SK-N-SH (cell line): ENCODE measurements at regions of chr6 and their contacts with region 1.

Region 1: DNA sequence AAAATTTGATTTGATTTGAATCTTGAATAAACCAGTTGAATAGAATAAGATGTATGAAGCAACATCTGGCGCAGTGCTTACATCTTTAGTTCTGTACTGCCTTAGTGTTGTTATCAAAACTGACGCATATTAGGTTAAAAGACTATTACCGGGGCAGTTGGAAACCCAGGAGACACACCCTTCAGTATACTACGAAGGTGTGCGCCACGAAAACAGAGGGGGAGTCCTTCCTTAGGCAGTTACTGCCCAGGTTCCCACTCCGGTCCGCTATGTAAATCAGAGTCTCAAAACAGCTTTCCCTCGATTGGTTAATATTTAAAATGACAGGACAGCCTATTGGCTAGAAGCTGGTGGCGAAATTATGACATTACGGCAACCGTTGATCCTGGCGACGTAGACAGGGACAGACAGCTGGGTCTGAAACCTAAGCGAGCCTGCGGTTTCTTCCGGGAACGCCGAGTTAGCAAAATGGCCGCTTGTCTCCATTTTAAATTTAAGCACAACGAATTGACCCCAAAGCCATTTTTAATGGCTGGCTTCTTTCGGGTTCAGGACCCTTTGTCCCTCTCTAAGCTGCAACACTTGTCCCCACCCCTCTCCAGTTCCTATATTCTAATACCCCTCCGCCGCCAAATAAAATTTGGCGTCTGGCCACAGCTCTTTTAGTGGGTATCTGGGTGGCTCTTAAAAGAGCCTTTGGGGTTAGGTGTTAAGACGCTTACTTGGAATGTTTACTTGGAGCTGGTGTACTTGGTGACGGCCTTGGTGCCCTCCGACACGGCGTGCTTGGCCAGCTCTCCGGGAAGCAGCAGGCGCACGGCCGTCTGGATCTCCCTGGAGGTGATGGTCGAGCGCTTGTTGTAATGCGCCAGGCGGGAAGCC is 35.8 kb downstream of the HFE start:
- DNase-seq: peak; percentile 76
- H3K4me3 ChIP-seq: peak overlapping the region; percentile 84 to 94
- H3K27ac ChIP-seq: peak overlapping the region; percentile 92 to 100
- H3K4me1 ChIP-seq: peaks cover 7% of the 10 kb centered on the region in 2 experiments; a peak in 3 of 4 replicates
- H3K27me3 ChIP-seq: no peaks in the 10 kb centered on the region
- CTCF ChIP-seq: no peak
- EP300 ChIP-seq: peak; percentile 93 to 98
- RAD21 ChIP-seq: no peak

Region 2: DNA sequence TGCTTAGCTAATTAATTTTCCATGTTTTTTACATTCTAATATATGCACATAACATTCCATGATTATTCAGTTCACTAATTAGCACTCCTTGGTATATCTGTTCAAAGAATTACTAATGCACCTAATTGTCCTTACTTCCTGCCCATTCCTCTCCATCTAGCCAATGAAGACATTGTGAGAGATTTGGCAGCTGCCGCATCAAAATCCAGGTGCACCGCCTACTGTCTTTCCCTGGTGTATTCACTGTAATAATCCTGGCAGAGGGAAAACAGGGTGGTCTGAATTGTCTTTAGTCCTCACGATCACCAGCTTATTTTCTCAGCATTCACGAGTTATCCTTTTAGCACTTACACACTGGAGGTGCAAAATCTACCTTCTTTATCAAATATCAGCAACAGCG is 532.0 kb before region 1 on chr6:
- CTCF ChIA-PET with region 1: no interaction called
- POLR2A ChIA-PET with region 1: no interaction called
- DNase-seq: peak; percentile 25
- H3K4me3 ChIP-seq: no peak overlapping the region
- H3K27ac ChIP-seq: peak overlapping the region in 1 of 2 experiments; percentile 60; a peak in 2 of 4 replicates
- H3K4me1 ChIP-seq: peaks cover 0 to 10% of the 10 kb centered on the region in 2 experiments; a peak in 2 of 4 replicates
- H3K27me3 ChIP-seq: no peaks in the 10 kb centered on the region
- CTCF ChIP-seq: no peak
- EP300 ChIP-seq: no peak
- RAD21 ChIP-seq: no peak

Region 3: DNA sequence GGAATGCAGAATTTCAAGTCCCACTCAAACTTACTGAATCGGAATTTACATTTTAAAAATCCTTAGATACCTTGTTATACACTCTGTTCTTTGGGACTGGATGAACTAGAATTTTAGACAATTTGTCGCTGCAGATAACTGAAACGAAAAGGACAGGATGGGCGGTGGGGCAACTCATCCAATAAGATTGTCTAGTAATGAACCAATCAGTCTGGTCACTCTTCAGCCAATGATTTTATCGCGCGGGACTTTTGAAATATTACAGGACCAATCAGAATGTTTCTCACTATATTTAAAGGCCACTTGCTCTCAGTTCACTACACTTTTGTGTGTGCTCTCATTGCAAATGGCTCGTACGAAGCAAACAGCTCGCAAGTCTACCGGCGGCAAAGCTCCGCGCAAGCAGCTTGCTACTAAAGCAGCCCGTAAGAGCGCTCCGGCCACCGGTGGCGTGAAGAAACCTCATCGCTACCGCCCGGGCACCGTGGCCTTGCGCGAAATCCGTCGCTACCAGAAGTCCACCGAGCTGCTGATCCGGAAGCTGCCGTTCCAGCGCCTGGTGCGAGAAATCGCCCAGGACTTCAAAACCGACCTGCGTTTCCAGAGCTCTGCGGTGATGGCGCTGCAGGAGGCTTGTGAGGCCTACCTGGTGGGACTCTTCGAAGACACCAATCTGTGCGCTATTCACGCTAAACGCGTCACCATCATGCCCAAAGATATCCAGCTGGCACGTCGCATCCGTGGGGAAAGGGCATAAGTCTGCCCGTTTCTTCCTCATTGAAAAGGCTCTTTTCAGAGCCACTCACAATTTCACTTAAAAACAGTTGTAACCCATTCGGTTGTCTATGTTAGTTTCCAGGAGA is 77.7 kb before region 1 on chr6:
- CTCF ChIA-PET with region 1: no interaction called
- POLR2A ChIA-PET with region 1: interaction called, 55 read pairs
- DNase-seq: peak; percentile 77
- H3K4me3 ChIP-seq: peak overlapping the region; percentile 57 to 60
- H3K27ac ChIP-seq: peak overlapping the region; percentile 79 to 97
- H3K4me1 ChIP-seq: peaks cover 0 to 12% of the 10 kb centered on the region in 2 experiments; a peak in 2 of 4 replicates
- H3K27me3 ChIP-seq: no peaks in the 10 kb centered on the region
- CTCF ChIP-seq: peak; percentile 37
- EP300 ChIP-seq: peak in 1 of 2 experiments; percentile 49; a peak in 1 of 4 replicates
- RAD21 ChIP-seq: no peak

Region 4: DNA sequence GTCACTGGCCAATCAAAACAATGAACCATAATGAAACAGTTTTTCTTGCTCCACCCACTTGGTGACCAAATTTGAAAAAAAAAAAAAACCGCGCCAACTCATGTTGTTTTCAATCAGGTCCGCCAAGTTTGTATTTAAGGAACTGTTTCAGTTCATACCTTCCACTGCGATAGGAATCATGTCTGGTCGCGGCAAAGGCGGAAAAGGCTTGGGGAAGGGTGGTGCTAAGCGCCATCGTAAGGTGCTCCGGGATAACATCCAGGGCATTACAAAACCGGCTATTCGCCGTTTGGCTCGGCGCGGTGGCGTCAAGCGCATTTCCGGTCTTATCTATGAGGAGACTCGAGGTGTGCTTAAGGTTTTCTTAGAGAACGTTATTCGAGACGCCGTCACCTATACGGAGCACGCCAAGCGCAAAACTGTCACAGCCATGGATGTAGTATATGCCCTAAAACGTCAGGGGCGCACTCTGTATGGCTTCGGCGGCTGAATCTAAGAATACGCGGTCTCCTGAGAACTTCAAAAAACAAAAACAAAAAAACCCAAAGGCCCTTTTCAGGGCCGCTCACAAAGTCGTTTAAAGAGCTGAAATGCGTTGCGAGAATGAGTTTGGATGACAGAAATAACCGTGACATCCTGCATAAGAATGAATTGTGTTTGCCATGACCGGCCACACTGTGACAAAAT is 19.1 kb before region 1 on chr6:
- CTCF ChIA-PET with region 1: interaction called, 4 read pairs
- POLR2A ChIA-PET with region 1: interaction called, 56 read pairs
- DNase-seq: peak; percentile 69
- H3K4me3 ChIP-seq: peak overlapping the region; percentile 55 to 65
- H3K27ac ChIP-seq: peak overlapping the region; percentile 85 to 97
- H3K4me1 ChIP-seq: peaks cover 7 to 17% of the 10 kb centered on the region in 2 experiments
- H3K27me3 ChIP-seq: no peaks in the 10 kb centered on the region
- CTCF ChIP-seq: peak; percentile 62
- EP300 ChIP-seq: peak; percentile 91 to 97
- RAD21 ChIP-seq: no peak

Region 5: DNA sequence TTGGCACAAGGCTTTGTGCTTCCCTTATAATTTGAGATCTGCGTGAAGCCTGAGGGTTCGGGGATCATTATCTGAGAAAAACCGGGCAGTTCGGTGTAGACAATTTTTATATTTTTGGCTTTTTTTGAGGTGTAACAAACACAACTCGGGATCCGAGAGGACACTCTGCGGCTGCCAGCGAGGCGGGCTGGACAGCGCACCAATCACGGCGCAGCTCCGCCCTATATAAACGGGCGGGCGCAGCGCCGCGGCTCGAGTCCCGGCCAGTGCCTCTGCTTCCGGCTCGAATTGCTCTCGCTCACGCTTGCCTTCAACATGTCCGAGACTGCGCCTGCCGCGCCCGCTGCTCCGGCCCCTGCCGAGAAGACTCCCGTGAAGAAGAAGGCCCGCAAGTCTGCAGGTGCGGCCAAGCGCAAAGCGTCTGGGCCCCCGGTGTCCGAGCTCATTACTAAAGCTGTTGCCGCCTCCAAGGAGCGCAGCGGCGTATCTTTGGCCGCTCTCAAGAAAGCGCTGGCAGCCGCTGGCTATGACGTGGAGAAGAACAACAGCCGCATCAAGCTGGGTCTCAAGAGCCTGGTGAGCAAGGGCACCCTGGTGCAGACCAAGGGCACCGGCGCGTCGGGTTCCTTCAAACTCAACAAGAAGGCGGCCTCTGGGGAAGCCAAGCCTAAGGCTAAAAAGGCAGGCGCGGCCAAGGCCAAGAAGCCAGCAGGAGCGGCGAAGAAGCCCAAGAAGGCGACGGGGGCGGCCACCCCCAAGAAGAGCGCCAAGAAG is 33.2 kb after region 1 on chr6:
- CTCF ChIA-PET with region 1: no interaction called
- POLR2A ChIA-PET with region 1: interaction called, 623 read pairs
- DNase-seq: peak; percentile 88
- H3K4me3 ChIP-seq: peak overlapping the region; percentile 82 to 90
- H3K27ac ChIP-seq: peak overlapping the region; percentile 88 to 97
- H3K4me1 ChIP-seq: no peaks in the 10 kb centered on the region; a peak in 3 of 4 replicates
- H3K27me3 ChIP-seq: no peaks in the 10 kb centered on the region
- CTCF ChIP-seq: no peak
- EP300 ChIP-seq: peak in 1 of 2 experiments; percentile 60; a peak in 1 of 4 replicates
- RAD21 ChIP-seq: no peak

Region 6: GRCh38 chr6:26196846-26197648 is 74.0 kb after region 1 on chr6:
- CTCF ChIA-PET with region 1: interaction called, 3 read pairs
- POLR2A ChIA-PET with region 1: interaction called, 136 read pairs
- DNase-seq: peak; percentile 81
- H3K4me3 ChIP-seq: peak overlapping the region; percentile 84 to 96
- H3K27ac ChIP-seq: peak overlapping the region; percentile 87 to 94
- H3K4me1 ChIP-seq: peaks cover 12 to 16% of the 10 kb centered on the region in 2 experiments; a peak in 3 of 4 replicates
- H3K27me3 ChIP-seq: no peaks in the 10 kb centered on the region
- CTCF ChIP-seq: peak; percentile 19; the same call in 1 of the 2 replicates
- EP300 ChIP-seq: peak in 1 of 2 experiments; percentile 43; a peak in 1 of 4 replicates
- RAD21 ChIP-seq: no peak

Region 7: GRCh38 chr6:26249957-26250697 is 127.1 kb after region 1 on chr6:
- CTCF ChIA-PET with region 1: no interaction called
- POLR2A ChIA-PET with region 1: interaction called, 17 read pairs
- DNase-seq: peak; percentile 58
- H3K4me3 ChIP-seq: peak overlapping the region; percentile 88 to 92
- H3K27ac ChIP-seq: peak overlapping the region; percentile 85 to 97
- H3K4me1 ChIP-seq: peaks cover 0 to 7% of the 10 kb centered on the region in 2 experiments; a peak in 3 of 4 replicates
- H3K27me3 ChIP-seq: no peaks in the 10 kb centered on the region
- CTCF ChIP-seq: peak; percentile 54
- EP300 ChIP-seq: 0 out of 4 replicates have a peak, but pooled peaks of 1 of the 2 experiments have one; percentile 12
- RAD21 ChIP-seq: no peak; the same call in 1 of the 2 replicates